CD4-positive, alpha-beta T cell (primary cell): ENCODE measurements at regions of chr1 and their contacts with region 1.

Region 1: DNA sequence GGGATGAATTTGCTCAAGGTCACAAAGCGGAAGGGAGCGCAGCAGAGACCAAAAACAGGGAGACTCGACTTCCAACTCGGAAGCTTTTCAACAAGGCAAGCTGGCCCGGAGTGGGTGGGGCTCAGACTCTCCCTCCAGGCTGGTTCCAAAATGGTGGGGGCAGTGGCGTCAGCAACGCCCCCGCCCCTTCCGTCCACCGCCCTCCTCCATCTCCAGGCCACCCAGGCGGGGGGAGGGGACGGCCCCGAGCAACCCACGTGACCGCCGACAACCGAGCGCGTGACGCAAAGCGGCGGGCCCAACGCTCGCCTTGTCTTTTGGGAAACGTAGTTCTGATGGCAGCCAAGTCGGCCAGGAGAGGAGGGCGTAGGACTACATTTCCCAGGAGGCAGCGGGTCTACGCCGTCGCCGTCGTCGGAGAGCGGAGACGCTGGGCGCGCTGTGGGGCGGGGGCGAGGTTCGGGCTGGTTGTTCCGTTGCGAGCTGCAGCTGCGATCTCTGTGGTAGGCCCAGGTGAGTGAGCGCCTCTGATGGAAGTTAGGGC is at the start of gene THRAP3:
- DNase-seq: peak; percentile 98 to 100 (median 99)
- ATAC-seq: peak; percentile 85
- H3K4me3 ChIP-seq: peak within 1 kb of the TSS; percentile 80
- H3K4me3 Mint-ChIP-seq: peak within 1 kb of the TSS; percentile 97
- H3K27ac ChIP-seq: peak within 1 kb of the TSS; percentile 97 to 99
- H3K27ac Mint-ChIP-seq: peak within 1 kb of the TSS; percentile 97
- H3K4me1 ChIP-seq: peaks cover 47% of the 10 kb centered on the region
- H3K4me1 Mint-ChIP-seq: peaks cover 33% of the 10 kb centered on the region
- H3K27me3 ChIP-seq: no peaks in the 10 kb centered on the region
- H3K27me3 Mint-ChIP-seq: no peaks in the 10 kb centered on the region
- CTCF ChIP-seq: no peak
- total RNA-seq, gene THRAP3: 68.7 to 76.1 TPM

Region 2: DNA sequence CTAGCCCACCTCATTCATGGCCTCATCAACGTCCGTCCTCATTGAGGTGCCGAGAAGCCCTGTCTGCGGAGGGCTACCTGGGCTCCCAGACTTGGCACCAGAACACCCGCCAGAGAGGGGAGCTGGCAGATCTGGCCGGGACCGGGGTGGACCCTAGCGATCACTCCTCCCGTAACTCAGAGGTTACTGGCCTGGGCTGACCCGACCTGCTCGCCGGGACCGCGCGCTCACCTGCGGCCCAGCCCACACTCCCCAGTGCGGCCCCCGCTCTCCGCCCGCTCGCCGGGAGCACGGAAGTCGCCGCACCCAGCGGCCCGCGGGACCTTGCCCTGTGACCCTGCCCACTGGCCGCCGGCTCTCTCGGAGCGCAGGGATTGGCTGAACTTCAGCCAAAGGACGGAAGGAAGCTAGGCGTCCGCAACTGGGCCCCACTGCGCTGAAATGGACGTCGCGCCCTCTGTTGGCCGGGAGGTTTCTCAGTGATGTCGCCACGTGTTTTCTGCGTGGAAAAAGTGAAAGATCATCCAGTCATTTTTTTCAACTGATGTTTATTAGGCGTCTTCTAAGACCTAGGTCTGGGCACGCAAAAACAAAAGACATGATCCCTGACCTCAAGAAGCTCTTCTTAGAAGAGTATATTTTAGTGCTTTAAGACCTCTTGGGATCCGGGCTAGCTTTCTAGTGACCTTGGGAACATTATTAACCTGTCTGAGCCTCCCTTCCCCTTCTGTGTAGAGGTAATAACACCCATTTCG is 1364.4 kb before region 1 on chr1 and contains the start of gene SMIM12:
- CTCF ChIA-PET with region 1: no interaction called
- POLR2A ChIA-PET with region 1: no interaction called
- intact Hi-C with region 1: loop called in 1 of 2 experiments (anchors 10 kb)
- DNase-seq: peak; percentile 75 to 94 (median 88)
- ATAC-seq: peak; percentile 83
- H3K4me3 ChIP-seq: peak within 1 kb of the TSS; percentile 98
- H3K4me3 Mint-ChIP-seq: peak within 1 kb of the TSS; percentile 93
- H3K27ac ChIP-seq: peak within 1 kb of the TSS; percentile 80 to 91
- H3K27ac Mint-ChIP-seq: peak within 1 kb of the TSS; percentile 88
- H3K4me1 ChIP-seq: peaks cover 48% of the 10 kb centered on the region
- H3K4me1 Mint-ChIP-seq: peaks cover 68% of the 10 kb centered on the region
- H3K27me3 ChIP-seq: no peaks in the 10 kb centered on the region
- H3K27me3 Mint-ChIP-seq: no peaks in the 10 kb centered on the region
- CTCF ChIP-seq: peak; percentile 83
- total RNA-seq, gene SMIM12: 43.0 to 44.6 TPM

Region 3: DNA sequence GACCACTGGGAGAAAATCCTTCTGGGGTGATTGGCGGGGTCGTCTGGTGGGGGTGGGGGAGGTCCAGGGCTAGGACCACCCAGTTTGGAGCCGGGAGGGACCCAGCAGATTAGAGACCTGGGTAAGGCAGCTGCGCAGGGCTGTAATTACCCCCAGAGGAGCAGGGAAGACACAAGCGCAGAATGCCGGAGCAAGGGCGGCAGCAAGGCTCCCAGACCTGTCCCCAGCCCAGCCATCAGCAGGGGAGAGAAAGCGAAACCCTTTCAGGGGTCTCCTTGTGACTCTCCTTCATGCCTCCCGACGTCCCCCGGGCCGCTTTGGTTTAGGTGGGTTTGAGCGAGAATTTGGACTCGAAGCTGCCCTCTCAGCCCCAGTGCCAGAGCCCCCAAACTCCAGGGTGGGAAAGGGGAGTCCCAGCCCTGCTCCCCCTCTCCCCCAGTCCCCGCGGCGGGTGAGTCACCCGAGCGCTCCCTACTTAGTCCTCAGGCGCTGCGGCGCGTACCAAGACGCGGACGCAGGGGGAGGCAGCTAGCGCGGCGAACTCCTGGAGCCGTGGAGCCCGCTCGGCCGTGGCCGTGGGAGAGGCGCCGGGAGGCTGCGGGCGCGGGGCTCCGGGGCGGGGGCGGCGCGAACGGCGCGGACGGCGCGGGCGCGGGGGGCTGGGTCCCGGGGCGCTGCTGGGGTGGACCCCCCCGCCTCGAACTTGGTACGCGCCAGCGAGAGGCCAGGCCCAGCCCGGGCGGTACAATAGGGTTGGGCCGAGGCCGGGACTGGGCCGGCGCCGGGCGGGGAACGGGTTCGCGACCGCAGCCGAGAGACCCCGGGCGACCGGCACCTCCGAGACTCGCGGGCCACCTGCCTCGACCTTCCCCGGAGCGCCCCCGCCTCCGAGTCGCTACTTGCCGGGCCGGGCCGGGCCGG is 68.4 kb before region 1 on chr1 and contains the start of gene MAP7D1:
- CTCF ChIA-PET with region 1: interaction called, 3 read pairs
- POLR2A ChIA-PET with region 1: interaction called, 82 read pairs
- intact Hi-C with region 1: loop called in 1 of 2 experiments (anchors 5 kb)
- DNase-seq: peak; percentile 75 to 93 (median 84)
- ATAC-seq: peak; percentile 74
- H3K4me3 ChIP-seq: peak within 1 kb of the TSS; percentile 99
- H3K4me3 Mint-ChIP-seq: peak within 1 kb of the TSS; percentile 94
- H3K27ac ChIP-seq: peak within 1 kb of the TSS; percentile 86 to 96
- H3K27ac Mint-ChIP-seq: peak within 1 kb of the TSS; percentile 97
- H3K4me1 ChIP-seq: peaks cover 79% of the 10 kb centered on the region
- H3K4me1 Mint-ChIP-seq: peaks cover 76% of the 10 kb centered on the region
- H3K27me3 ChIP-seq: no peaks in the 10 kb centered on the region
- H3K27me3 Mint-ChIP-seq: no peaks in the 10 kb centered on the region
- CTCF ChIP-seq: no peak
- total RNA-seq, gene MAP7D1: 156 to 163 TPM

Region 4: DNA sequence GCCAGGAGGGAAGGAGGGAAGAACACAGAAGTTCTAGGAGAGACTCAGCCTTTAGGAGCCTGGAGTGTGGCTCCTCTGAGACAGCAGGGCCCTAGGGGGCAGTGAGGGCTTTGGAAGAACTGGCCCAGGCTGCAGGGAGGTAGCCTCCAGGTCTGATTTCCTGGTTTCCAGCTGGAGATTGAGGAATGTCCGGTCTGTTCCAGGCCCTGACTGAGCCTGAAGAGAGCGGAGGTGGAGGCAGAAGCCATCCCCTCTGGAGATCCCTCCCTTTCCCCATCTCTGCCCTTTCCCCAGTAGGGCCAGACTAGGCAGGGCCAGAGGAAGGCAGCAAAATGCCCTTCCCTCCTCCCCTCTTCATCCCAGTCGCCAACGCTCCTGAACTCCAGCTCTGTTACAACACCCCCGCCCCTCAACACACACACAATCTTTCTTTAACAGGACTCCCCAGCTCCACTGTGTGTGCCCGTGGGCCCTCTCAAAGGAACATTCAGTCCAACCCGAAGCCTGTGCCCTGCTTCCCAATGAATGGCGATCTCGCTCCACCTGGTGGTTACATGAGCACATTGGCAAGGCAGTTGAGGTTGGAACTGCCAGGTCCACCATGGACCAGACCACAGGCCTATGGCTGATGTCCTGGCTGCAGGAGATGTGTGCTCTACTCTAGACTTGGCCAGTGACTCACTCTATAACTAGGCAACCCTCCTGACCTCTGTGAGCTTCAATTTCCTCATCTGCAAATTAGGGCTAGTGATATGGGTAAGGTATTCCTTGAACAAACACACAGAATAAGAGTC is 36.1 kb before region 1 on chr1:
- CTCF ChIA-PET with region 1: interaction called, 18 read pairs
- POLR2A ChIA-PET with region 1: interaction called, 22 read pairs
- intact Hi-C with region 1: loop called in 1 of 2 experiments (anchors 1 kb)
- DNase-seq: peak; percentile 70 to 92 (median 76)
- ATAC-seq: peak; percentile 99
- H3K4me3 ChIP-seq: no peak overlapping the region
- H3K4me3 Mint-ChIP-seq: no peak overlapping the region
- H3K27ac ChIP-seq: peak overlapping the region in 1 of 2 donors; percentile 12
- H3K27ac Mint-ChIP-seq: peak overlapping the region; percentile 29
- H3K4me1 ChIP-seq: peaks cover 7% of the 10 kb centered on the region
- H3K4me1 Mint-ChIP-seq: peaks cover 10% of the 10 kb centered on the region
- H3K27me3 ChIP-seq: no peaks in the 10 kb centered on the region
- H3K27me3 Mint-ChIP-seq: no peaks in the 10 kb centered on the region
- CTCF ChIP-seq: peak; percentile 84

Region 5: GRCh38 chr1:36236302-36236701 is 12.2 kb after region 1 on chr1:
- CTCF ChIA-PET with region 1: interaction called, 4 read pairs
- POLR2A ChIA-PET with region 1: interaction called, 24 read pairs
- intact Hi-C with region 1: no loop called
- DNase-seq: no peak
- ATAC-seq: no peak
- H3K4me3 ChIP-seq: no peak overlapping the region
- H3K4me3 Mint-ChIP-seq: peak overlapping the region; percentile 42
- H3K27ac ChIP-seq: no peak overlapping the region
- H3K27ac Mint-ChIP-seq: peak overlapping the region; percentile 81
- H3K4me1 ChIP-seq: peaks cover 35% of the 10 kb centered on the region
- H3K4me1 Mint-ChIP-seq: peaks cover 59% of the 10 kb centered on the region
- H3K27me3 ChIP-seq: no peaks in the 10 kb centered on the region
- H3K27me3 Mint-ChIP-seq: no peaks in the 10 kb centered on the region
- CTCF ChIP-seq: no peak

Region 6: DNA sequence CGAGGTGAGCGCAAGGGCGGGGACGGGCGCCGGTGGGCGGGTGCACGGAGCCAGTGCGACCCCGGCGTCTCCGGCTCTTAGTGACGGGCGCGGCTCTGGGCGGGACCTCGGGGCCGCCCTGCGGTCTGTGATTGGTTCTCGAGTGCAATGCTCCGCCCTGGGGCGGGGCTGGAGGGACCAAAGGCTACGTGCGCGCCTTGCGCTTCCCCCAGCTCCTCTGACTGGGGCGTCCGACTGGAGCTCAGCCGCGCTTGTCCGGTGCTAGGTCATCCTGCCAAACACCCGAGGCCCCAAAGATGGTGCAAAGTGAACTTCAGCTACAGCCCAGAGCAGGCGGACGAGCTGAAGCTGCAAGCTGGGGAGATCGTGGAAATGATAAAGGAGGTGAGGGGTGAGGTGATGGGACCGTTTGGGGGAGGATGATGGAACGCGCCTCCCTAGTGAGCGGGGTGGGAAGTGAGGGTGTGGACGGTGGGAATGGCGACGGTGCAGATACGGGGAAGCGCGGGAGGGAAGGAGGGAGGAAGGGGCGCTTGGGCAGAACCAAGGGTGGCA is 82.9 kb after region 1 on chr1:
- CTCF ChIA-PET with region 1: no interaction called
- POLR2A ChIA-PET with region 1: interaction called, 13 read pairs
- intact Hi-C with region 1: no loop called
- DNase-seq: peak; percentile 85 to 96 (median 90)
- ATAC-seq: peak; percentile 98
- H3K4me3 ChIP-seq: peak overlapping the region; percentile 64
- H3K4me3 Mint-ChIP-seq: peak overlapping the region; percentile 94
- H3K27ac ChIP-seq: peak overlapping the region in 1 of 2 donors; percentile 34
- H3K27ac Mint-ChIP-seq: peak overlapping the region; percentile 78
- H3K4me1 ChIP-seq: peaks cover 24% of the 10 kb centered on the region
- H3K4me1 Mint-ChIP-seq: peaks cover 16% of the 10 kb centered on the region
- H3K27me3 ChIP-seq: no peaks in the 10 kb centered on the region
- H3K27me3 Mint-ChIP-seq: no peaks in the 10 kb centered on the region
- CTCF ChIP-seq: no peak

Region 7: GRCh38 chr1:36463803-36464604 is 239.9 kb after region 1 on chr1 and contains the start of gene MRPS15:
- CTCF ChIA-PET with region 1: no interaction called
- POLR2A ChIA-PET with region 1: interaction called, 13 read pairs
- intact Hi-C with region 1: loop called in 1 of 2 experiments (anchors 5 kb)
- DNase-seq: peak; percentile 84 to 97 (median 93)
- ATAC-seq: peak; percentile 96
- H3K4me3 ChIP-seq: peak within 1 kb of the TSS; percentile 97
- H3K4me3 Mint-ChIP-seq: peak within 1 kb of the TSS; percentile 99
- H3K27ac ChIP-seq: peak within 1 kb of the TSS; percentile 90 to 93
- H3K27ac Mint-ChIP-seq: peak within 1 kb of the TSS; percentile 99
- H3K4me1 ChIP-seq: peaks cover 25% of the 10 kb centered on the region
- H3K4me1 Mint-ChIP-seq: peaks cover 31% of the 10 kb centered on the region
- H3K27me3 ChIP-seq: no peaks in the 10 kb centered on the region
- H3K27me3 Mint-ChIP-seq: no peaks in the 10 kb centered on the region
- CTCF ChIP-seq: no peak
- total RNA-seq, gene MRPS15: 35.4 to 36.4 TPM